Activated CD4-positive, alpha-beta T cell treated with anti-CD3 and anti-CD28 coated beads, Interleukin-2, amount 10 ng/mL, durations not matched to agents 24 days and 14 days (primary cell): ENCODE measurements at regions of chr10 and their contacts with region 1.

Region 1: GRCh38 chr10:51001587-51001986 is 72.7 kb upstream of the PRKG1 start:
- DNase-seq: no peak
- H3K4me3 Mint-ChIP-seq: no peak overlapping the region
- H3K27ac Mint-ChIP-seq: no peak overlapping the region
- H3K4me1 Mint-ChIP-seq: no peaks in the 10 kb centered on the region
- H3K27me3 Mint-ChIP-seq: peaks cover 8% of the 10 kb centered on the region

Region 2: GRCh38 chr10:52215745-52216361 is 1214.3 kb after region 1 on chr10:
- intact Hi-C with region 1: loop called (anchors 5 kb)
- DNase-seq: peak; percentile 81
- H3K4me3 Mint-ChIP-seq: no peak overlapping the region
- H3K27ac Mint-ChIP-seq: no peak overlapping the region
- H3K4me1 Mint-ChIP-seq: no peaks in the 10 kb centered on the region
- H3K27me3 Mint-ChIP-seq: no peaks in the 10 kb centered on the region